Activated B cell treated with CpG ODN at 0.5 μM for 24 hours (primary cell): ENCODE measurements at regions of chr14 and their contacts with region 1.

Region 1: DNA sequence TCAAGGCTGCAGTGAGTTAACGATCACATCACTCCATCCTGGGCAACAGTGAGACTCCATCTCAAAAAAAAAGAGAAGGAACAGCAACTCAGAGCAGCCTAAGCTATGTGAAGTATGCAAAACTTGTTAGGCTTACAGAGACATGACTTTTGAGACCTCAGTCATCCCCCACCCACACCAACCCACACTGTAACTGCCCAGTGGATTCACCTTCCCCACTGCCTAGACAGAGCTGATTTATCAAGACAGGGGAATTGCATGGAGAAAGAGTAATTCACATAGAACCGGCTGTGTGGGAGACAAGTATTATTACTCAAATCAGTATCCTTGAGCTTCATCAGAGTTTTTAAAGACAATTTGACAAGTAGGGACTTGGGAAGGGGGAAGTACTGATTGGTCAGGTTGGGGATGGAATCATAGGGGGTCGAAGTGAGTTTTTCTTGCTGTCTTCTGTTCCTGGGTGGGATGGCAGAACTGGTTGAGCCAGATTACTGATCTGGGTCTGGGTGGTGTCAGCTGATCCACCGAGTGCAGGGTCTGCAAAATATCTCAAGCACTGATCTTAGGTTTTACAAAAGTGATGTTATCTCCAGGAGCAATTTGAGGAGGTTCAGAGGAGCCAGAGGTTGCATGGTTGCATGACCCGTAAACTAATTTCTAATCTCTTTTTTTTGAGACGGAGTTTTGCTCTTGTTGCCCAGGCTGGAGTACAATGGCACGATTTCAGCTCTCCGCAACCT is 6.2 kb upstream of the WDR89 start:
- DNase-seq: no peak
- ATAC-seq: no peak
- H3K4me3 Mint-ChIP-seq: no peak overlapping the region
- H3K27ac Mint-ChIP-seq: no peak overlapping the region
- H3K4me1 Mint-ChIP-seq: peaks cover 14% of the 10 kb centered on the region
- H3K27me3 Mint-ChIP-seq: no peaks in the 10 kb centered on the region
- CTCF ChIP-seq: no peak

Region 2: GRCh38 chr14:63682727-63683593 is 35.1 kb after region 1 on chr14:
- CTCF ChIA-PET with region 1: no interaction called
- POLR2A ChIA-PET with region 1: no interaction called
- intact Hi-C with region 1: loop called (anchors 5 kb)
- DNase-seq: no peak
- ATAC-seq: no peak
- H3K4me3 Mint-ChIP-seq: no peak overlapping the region
- H3K27ac Mint-ChIP-seq: no peak overlapping the region
- H3K4me1 Mint-ChIP-seq: peaks cover 2% of the 10 kb centered on the region
- H3K27me3 Mint-ChIP-seq: no peaks in the 10 kb centered on the region
- CTCF ChIP-seq: no peak

Region 3: GRCh38 chr14:63800651-63801375 is 152.9 kb after region 1 on chr14:
- CTCF ChIA-PET with region 1: no interaction called
- POLR2A ChIA-PET with region 1: no interaction called
- intact Hi-C with region 1: no loop called
- DNase-seq: no peak
- ATAC-seq: no peak
- H3K4me3 Mint-ChIP-seq: no peak overlapping the region
- H3K27ac Mint-ChIP-seq: no peak overlapping the region
- H3K4me1 Mint-ChIP-seq: peaks cover 3% of the 10 kb centered on the region
- H3K27me3 Mint-ChIP-seq: no peaks in the 10 kb centered on the region
- CTCF ChIP-seq: no peak